B cell (primary cell): ENCODE measurements at regions of chr12 and their contacts with region 1.

Region 1: DNA sequence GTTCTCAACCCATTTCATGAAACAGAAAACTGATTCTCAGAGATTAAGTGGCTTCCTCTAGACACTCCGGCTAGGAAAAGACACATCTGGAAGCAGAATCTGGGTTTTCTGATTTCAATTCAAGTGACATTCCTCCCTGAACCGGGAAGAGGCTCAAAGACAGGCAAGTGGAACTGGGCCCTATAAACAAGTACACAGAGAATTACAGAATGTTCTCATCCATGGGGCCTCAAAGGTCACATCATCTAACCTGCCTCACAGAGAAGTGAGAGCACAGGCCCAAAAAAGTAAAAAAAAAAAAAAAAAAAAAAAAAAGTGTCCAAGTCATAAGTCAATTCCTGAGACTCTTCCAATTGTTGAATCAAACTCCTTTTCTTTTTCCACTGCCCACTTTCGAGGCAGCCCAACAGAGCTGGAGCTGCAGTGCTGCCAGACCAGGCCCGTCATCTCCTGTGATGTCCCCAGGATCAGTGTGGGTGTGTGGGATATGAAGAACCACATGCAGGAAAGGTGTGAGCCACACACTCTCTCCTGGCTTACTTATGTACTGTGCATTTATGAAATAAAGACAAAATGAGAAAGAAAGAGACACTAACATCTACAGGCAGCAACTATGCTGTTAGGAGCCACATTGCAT is 2.8 kb upstream of the KRT1 start:
- DNase-seq: no peak
- ATAC-seq: no peak
- H3K4me3 ChIP-seq: no peak overlapping the region
- H3K4me3 Mint-ChIP-seq: no peak overlapping the region
- H3K27ac ChIP-seq: no peak overlapping the region
- H3K27ac Mint-ChIP-seq: no peak overlapping the region
- H3K4me1 ChIP-seq: no peaks in the 10 kb centered on the region
- H3K4me1 Mint-ChIP-seq: no peaks in the 10 kb centered on the region
- H3K27me3 ChIP-seq: peaks cover 0 to 7% (median 0%) of the 10 kb centered on the region in 4 experiments
- H3K27me3 Mint-ChIP-seq: peaks cover 47% of the 10 kb centered on the region
- CTCF ChIP-seq: no peak

Region 2: GRCh38 chr12:52522346-52523011 is 160.6 kb before region 1 on chr12:
- CTCF ChIA-PET with region 1: no interaction called
- POLR2A ChIA-PET with region 1: no interaction called
- intact Hi-C with region 1: no loop called
- DNase-seq: no peak
- ATAC-seq: no peak
- H3K4me3 ChIP-seq: no peak overlapping the region
- H3K4me3 Mint-ChIP-seq: no peak overlapping the region
- H3K27ac ChIP-seq: no peak overlapping the region
- H3K27ac Mint-ChIP-seq: no peak overlapping the region
- H3K4me1 ChIP-seq: no peaks in the 10 kb centered on the region
- H3K4me1 Mint-ChIP-seq: no peaks in the 10 kb centered on the region
- H3K27me3 ChIP-seq: no peaks in the 10 kb centered on the region
- H3K27me3 Mint-ChIP-seq: peaks cover 3% of the 10 kb centered on the region
- CTCF ChIP-seq: no peak

Region 3: DNA sequence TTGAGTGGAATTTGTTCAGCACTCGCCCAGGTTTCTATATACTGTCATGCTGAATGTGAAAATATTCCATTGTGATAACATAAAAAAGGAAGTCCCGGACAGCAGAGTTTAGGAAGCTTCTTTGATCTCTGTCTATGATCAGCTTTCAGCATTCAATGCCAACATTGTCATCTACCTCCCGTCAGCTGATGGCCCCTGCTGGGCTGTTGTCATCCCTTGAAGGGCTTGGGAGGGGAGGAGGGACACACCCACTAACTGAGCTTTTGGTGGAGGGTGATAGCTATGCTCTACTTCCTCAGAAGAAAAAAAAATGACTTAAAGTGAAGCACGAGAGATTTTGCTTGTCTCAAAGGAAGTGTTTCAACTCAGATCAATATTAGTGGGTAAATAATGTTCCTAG is 25.0 kb after region 1 on chr12:
- CTCF ChIA-PET with region 1: no interaction called
- POLR2A ChIA-PET with region 1: no interaction called
- intact Hi-C with region 1: loop called (anchors 1 kb)
- DNase-seq: no peak
- ATAC-seq: no peak
- H3K4me3 ChIP-seq: no peak overlapping the region
- H3K4me3 Mint-ChIP-seq: no peak overlapping the region
- H3K27ac ChIP-seq: no peak overlapping the region
- H3K27ac Mint-ChIP-seq: no peak overlapping the region
- H3K4me1 ChIP-seq: no peaks in the 10 kb centered on the region
- H3K4me1 Mint-ChIP-seq: no peaks in the 10 kb centered on the region
- H3K27me3 ChIP-seq: peaks cover 0 to 7% (median 4%) of the 10 kb centered on the region in 4 experiments
- H3K27me3 Mint-ChIP-seq: peaks cover 21% of the 10 kb centered on the region
- CTCF ChIP-seq: no peak